Right ventricle myocardium inferior (tissue), 1 donor: ENCODE measurements at regions of chr1 and their contacts with region 1.

Region 1: GRCh38 chr1:6794164-6794563 is 8.9 kb downstream of the CAMTA1 start:
- DNase-seq: no peak
- ATAC-seq: no peak

Region 2: DNA sequence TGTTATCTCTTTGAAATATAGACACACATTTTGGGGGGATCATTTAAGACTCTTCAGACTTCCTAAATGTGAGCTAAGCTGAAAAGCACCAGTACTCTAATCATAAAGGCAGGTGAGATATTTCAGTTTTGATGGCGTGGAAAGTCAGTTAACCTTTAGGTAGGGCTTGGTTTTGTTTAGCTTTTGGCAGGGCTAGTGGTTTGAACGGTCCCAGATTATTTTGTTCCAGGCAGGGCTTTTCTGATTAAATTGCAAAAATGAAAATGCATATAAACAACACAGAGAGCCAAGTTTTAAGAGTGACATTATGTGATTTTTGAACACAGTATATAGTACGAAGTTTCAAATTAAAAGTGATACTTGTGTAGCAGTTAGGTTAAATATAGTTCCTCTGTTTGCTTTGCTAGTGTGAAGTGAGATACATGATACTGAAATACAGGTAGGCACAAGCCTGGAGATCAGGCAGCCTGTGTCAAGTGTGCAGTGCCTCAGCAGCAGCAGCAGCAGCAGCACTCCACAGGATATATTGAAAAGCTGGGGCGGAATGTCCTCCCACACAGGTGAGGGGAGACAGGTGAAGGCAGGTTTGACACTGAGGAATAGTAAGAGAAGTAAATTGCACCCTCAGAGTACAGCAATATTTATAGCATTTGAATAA is 38.5 kb after region 1 on chr1:
- intact Hi-C with region 1: loop called (anchors 5 kb)
- DNase-seq: no peak
- ATAC-seq: no peak

Region 3: DNA sequence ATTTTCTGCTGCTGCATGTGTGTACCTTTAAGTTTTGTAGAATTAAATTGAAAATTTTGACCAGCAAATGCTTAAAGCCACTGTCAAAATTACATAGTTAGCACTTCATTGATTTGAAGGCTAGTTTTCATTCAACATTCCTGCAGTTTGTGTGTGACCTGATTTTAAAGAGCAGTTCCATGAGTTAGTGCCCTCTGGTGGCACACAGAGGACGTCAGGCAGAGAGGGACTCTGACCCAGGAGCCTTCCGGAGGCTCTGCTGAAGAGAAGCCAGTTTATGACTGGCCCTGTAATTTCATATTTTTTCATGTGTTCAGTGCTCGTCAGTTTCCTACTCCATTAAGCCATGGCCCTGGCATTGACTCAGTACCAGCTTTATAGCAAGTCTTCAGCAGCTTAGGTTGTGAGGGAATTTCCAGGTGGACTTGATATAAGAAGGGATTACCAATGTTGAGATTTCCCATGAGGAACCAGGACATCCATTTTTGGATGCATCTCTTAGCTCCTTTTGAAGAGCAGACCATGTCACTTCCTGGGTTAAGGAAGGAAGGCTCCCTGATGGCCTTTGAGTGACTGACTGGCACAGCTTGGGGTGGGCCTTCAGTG is 95.8 kb after region 1 on chr1:
- intact Hi-C with region 1: loop called (anchors 5 kb)
- DNase-seq: no peak
- ATAC-seq: peak; percentile 63

Region 4: DNA sequence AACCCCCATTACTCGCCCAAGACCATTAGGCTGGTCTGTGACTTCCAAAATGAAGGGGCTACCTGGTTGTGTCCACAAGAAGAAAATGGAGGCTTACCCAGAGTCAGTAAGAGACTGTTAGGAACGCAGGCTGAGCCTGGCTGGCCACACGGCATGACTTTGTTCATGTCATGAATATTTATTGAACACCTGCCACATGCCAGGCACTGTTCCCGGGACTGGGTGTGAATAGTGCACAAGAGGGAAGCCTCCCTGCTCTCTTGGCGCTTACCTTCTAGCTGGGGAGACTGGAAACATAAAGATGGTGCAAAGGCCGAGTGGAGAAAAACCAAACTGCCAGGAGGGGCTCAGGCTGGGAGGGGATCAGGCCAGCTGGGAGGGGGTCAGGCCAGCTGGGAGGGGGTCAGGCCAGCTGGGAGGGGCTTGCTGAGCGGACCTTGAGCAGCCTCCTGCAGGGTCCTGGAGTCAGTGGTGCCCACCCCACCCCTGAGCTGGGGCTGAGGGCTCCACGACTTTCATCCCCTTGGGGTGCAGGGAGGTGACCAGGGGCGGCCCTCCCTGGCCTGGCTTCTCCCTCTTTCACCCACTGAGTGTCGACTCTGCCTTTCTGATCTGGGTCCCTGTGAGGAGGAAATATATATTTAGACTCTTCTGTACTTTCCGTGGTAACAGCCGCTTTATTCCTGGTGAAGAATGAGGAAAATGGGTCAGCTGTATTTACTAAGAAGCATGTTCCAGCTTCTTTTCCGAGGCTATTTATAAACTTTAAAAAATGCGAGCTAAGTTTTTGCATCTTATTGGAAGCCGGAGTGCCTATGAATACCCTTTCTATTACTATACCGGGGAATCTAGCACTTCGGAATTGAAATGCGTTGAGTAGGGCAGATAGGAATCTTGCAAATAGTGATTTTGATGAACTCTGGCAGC is 130.1 kb after region 1 on chr1:
- intact Hi-C with region 1: no loop called
- DNase-seq: no peak
- ATAC-seq: no peak

Region 5: DNA sequence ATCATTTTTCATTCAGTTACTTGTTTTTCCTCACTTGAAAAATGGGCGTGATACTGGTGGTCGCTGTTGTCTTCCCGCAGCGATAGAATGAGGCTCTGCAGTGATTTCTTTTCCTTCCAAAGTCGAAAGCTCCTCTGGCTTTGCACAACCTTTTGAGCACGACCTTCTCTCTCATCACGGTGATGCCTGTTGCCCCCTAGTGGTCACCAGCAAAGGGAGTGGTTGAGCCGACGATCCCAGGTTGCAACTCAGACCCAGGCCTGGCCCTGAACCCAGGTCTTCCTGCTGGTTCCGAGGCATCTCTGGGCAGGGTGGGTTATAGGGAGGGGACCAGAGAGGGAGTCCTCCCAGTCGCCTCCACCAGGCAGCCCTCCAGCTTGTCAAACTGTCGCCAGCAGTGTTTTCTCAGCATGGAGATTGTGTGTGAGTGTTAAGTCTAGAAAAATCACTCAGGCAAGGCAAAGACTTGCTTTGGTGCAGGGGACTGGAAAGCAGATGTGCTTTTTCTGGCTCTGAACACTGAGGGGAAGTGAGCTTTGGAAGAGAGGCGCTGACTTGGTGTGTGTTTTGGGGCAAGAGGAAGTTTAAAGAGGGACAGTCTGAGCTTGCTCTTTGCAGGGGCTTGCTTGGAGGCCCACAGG is 276.3 kb after region 1 on chr1:
- intact Hi-C with region 1: loop called (anchors 5 kb)
- DNase-seq: no peak
- ATAC-seq: peak; percentile 73